ENCODE measurements at regions of chr11 and their contacts with region 1.

Region 1: GRCh38 chr11:122743949-122744348 is 88.4 kb downstream of the UBASH3B start:
- DNase-seq: peak; percentile 90
- ATAC-seq: peak; percentile 66
- H3K4me3 Mint-ChIP-seq: no peak overlapping the region
- H3K27ac Mint-ChIP-seq: no peak overlapping the region
- H3K4me1 Mint-ChIP-seq: peaks cover 14% of the 10 kb centered on the region
- H3K27me3 Mint-ChIP-seq: peaks cover 6% of the 10 kb centered on the region

Region 2: GRCh38 chr11:122655527-122656072 is 88.3 kb before region 1 on chr11 and contains the start of gene UBASH3B:
- CTCF ChIA-PET with region 1: interaction called, 11 read pairs
- POLR2A ChIA-PET with region 1: interaction called, 8 read pairs
- intact Hi-C with region 1: loop called in 1 of 2 experiments (anchors 1 kb)
- DNase-seq: peak; percentile 77
- ATAC-seq: peak; percentile 74
- H3K4me3 Mint-ChIP-seq: peak within 1 kb of the TSS; percentile 91
- H3K27ac Mint-ChIP-seq: peak within 1 kb of the TSS; percentile 79
- H3K4me1 Mint-ChIP-seq: peaks cover 40% of the 10 kb centered on the region
- H3K27me3 Mint-ChIP-seq: peaks cover 6% of the 10 kb centered on the region
- total RNA-seq, gene UBASH3B: 16.2 to 20.1 TPM

Region 3: DNA sequence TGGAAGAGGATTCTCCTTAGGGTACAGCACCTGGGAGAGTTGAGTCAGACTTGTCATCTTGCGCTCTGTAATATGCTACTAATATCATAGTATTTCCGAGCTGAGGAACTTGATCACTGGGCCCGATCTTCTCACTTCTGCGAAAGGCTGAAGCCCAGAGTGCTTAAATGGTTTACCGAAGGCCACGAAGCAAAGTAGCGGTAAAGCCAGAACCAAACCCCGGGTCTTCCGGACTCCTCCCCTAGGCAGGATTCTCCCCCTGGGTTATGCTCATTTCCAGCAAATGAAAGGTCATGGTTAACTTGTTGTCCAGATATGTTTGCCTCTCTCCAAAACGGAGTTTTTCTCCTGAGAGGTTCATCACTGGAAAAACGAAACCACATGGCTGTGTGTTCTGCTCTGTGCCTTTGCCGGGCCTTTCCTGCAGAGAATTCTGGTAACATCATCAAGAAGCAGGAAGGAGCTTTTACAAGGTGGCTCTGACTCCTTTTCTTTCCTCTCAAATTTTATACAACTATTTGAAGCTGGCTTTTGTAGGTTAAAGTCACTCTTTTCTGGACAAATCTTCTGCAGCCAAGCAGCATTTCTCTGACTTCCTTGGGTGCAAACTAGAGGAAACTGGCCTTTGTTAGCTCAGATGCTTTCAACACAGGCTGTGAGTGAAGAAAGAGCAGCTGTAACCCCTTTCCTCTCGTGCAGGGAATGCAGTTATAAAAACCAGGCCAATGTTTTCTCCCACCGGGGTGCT is 53.0 kb before region 1 on chr11:
- CTCF ChIA-PET with region 1: interaction called, 5 read pairs
- POLR2A ChIA-PET with region 1: interaction called, 4 read pairs
- intact Hi-C with region 1: loop called in 1 of 2 experiments (anchors 1 kb)
- DNase-seq: peak; percentile 35
- ATAC-seq: peak; percentile 16
- H3K4me3 Mint-ChIP-seq: peak overlapping the region; percentile 46
- H3K27ac Mint-ChIP-seq: peak overlapping the region; percentile 80
- H3K4me1 Mint-ChIP-seq: peaks cover 79% of the 10 kb centered on the region
- H3K27me3 Mint-ChIP-seq: no peaks in the 10 kb centered on the region

Region 4: GRCh38 chr11:122721964-122722266 is 22.0 kb before region 1 on chr11:
- CTCF ChIA-PET with region 1: interaction called, 3 read pairs
- POLR2A ChIA-PET with region 1: interaction called, 7 read pairs
- intact Hi-C with region 1: loop called (anchors 1 kb)
- DNase-seq: peak; percentile 42
- ATAC-seq: peak; percentile 72
- H3K4me3 Mint-ChIP-seq: no peak overlapping the region
- H3K27ac Mint-ChIP-seq: no peak overlapping the region
- H3K4me1 Mint-ChIP-seq: peaks cover 65% of the 10 kb centered on the region
- H3K27me3 Mint-ChIP-seq: no peaks in the 10 kb centered on the region

Region 5: GRCh38 chr11:122754553-122755322 is 10.8 kb after region 1 on chr11:
- CTCF ChIA-PET with region 1: interaction called, 10 read pairs
- POLR2A ChIA-PET with region 1: interaction called, 4 read pairs
- intact Hi-C with region 1: no loop called
- DNase-seq: peak; percentile 52
- ATAC-seq: peak; percentile 47
- H3K4me3 Mint-ChIP-seq: no peak overlapping the region
- H3K27ac Mint-ChIP-seq: no peak overlapping the region
- H3K4me1 Mint-ChIP-seq: peaks cover 60% of the 10 kb centered on the region
- H3K27me3 Mint-ChIP-seq: peaks cover 3% of the 10 kb centered on the region

Region 6: DNA sequence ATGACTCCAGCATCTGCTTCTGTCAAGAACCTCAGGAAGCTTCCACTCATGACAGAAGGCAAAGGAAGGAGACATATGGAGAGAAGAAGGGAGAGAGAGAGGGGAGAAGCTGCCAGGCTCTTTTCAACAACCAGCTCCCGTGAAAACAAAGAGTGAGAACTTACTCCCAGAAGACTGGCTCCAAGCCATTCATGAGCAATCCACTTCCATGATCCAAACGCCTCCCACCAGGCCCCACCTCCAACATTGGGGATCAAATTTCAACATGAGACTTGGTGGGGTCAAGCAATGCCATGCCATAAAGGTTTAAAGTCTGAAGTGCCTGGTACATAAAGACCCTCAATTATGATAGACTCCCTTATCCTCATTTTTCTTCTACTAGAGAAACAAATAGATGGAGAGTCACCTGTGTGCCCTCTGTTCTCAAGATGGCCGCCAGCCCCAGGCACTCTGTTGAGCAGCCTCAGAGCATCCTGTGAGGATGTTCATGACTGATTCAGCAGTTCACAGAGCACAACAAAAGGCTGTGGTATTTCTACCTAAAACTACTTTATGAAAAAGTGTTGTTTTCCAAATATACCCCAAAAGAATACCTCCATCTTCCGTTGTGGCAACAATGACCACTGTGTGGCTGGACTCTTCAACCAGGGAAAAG is 25.3 kb after region 1 on chr11:
- CTCF ChIA-PET with region 1: no interaction called
- POLR2A ChIA-PET with region 1: no interaction called
- intact Hi-C with region 1: no loop called
- DNase-seq: no peak
- ATAC-seq: no peak
- H3K4me3 Mint-ChIP-seq: no peak overlapping the region
- H3K27ac Mint-ChIP-seq: no peak overlapping the region
- H3K4me1 Mint-ChIP-seq: peaks cover 9% of the 10 kb centered on the region
- H3K27me3 Mint-ChIP-seq: no peaks in the 10 kb centered on the region

Region 7: DNA sequence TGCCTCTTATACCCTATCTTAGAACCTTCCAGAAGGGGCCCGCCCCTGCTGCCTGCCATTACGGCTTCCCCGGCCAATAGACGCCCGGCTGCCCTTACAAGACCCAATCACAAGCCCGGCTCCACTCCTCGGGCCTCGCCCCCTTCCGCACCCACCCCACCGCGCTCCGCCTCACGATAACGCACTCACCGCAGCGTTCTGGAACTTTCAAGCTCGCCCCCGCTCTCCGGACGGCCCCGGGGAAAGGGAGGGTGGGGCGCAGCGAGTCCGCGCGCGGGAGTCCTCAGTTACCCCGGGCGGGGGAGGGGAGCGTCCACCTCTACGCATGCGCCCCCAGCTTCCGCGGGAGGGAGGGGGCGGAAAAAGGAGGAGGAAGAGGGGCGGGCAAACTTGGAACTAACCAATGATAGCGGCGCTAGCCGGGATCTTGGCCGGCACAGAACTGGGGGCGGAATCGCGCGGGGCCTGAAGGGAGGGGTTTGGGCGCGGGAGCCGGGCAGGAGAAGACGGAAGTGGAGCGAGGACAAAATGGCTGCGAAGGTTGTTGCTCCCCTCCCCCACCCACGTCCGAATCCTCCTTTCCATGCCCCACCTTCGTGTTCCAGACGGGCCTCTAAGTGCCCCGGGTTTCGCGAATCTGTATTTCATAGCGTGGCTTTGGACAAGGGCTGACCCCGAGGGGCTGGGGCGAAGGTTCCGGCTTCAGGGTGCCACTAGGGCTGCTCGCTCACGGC is 318.4 kb after region 1 on chr11:
- CTCF ChIA-PET with region 1: no interaction called
- POLR2A ChIA-PET with region 1: interaction called, 7 read pairs
- intact Hi-C with region 1: loop called in 1 of 2 experiments (anchors 1 kb)
- DNase-seq: peak; percentile 100
- ATAC-seq: peak; percentile 89
- H3K4me3 Mint-ChIP-seq: peak overlapping the region; percentile 99
- H3K27ac Mint-ChIP-seq: peak overlapping the region; percentile 99
- H3K4me1 Mint-ChIP-seq: peaks cover 37% of the 10 kb centered on the region
- H3K27me3 Mint-ChIP-seq: no peaks in the 10 kb centered on the region

Measured in activated CD4-positive, alpha-beta T cell treated with anti-CD3 and anti-CD28 coated beads for 36 hours (primary cell).